Activated T-helper 1 cell treated with anti-CD3 and anti-CD28 coated beads, Interleukin-12 subunit alpha, Interleukin-12 subunit beta, Interleukin-2, Interleukin-4 antibody, amounts not matched to agents 30 ng/mL and 10 ng/mL and 1 ng/mL, durations not matched to agents 14 hours and 24 hours and 36 hours (primary cell): ENCODE measurements at regions of chr12 and their contacts with region 1.

Region 1: GRCh38 chr12:51326762-51327439 is 2.9 kb upstream of the BIN2 start:
- DNase-seq: peak; percentile 6
- H3K4me3 Mint-ChIP-seq: peak overlapping the region; percentile 55
- H3K27ac Mint-ChIP-seq: peak overlapping the region; percentile 89
- H3K4me1 Mint-ChIP-seq: peaks cover 75% of the 10 kb centered on the region
- H3K27me3 Mint-ChIP-seq: no peaks in the 10 kb centered on the region

Region 2: GRCh38 chr12:50504798-50505385 is 822.0 kb before region 1 on chr12 and contains the start of gene DIP2B:
- intact Hi-C with region 1: loop called (anchors 10 kb)
- DNase-seq: peak; percentile 93
- H3K4me3 Mint-ChIP-seq: peak within 1 kb of the TSS; percentile 95
- H3K27ac Mint-ChIP-seq: peak within 1 kb of the TSS; percentile 95
- H3K4me1 Mint-ChIP-seq: peaks cover 51% of the 10 kb centered on the region
- H3K27me3 Mint-ChIP-seq: peaks cover 2% of the 10 kb centered on the region
- total RNA-seq, gene DIP2B: 26.7 and 27.6 TPM in 2 replicates

Region 3: DNA sequence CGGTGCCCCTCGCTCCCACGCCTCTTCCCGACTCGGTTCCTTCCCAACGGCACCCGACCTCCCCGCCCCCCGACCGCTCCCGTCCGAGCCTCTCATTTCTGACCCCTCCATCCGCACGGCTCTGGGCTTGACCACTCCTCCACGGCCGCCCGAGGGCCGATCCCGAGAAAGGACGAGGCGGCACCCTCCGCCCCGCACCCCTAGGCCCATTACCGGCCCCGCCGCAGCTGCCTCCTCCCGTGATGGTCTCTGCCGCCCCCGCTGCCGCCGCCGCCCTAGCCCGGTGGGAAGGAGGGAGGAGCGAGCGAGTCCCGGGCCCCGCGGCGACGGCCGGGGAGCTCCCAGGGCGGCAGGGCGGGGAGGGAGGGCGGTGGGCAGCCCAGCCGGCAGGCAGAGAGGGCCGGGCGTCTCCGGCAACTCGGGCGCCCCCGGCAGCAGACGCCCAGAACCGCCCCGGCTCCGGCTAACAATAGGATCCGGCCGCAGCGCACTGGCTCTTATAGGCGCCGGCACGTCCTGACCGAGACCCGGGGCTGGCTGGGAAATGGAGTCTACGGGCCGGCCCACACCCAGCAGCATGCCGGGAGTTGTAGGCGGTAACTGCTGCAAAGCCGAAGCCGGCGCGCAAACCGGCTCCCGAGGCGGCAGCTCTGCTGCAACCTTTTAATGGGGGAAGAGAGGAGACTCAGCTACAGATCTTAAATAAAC is 243.6 kb before region 1 on chr12 and contains the start of gene CSRNP2:
- intact Hi-C with region 1: loop called (anchors 2 kb)
- DNase-seq: peak; percentile 94
- H3K4me3 Mint-ChIP-seq: peak within 1 kb of the TSS; percentile 99
- H3K27ac Mint-ChIP-seq: peak within 1 kb of the TSS; percentile 91
- H3K4me1 Mint-ChIP-seq: peaks cover 34% of the 10 kb centered on the region
- H3K27me3 Mint-ChIP-seq: peaks cover 3% of the 10 kb centered on the region
- total RNA-seq, gene CSRNP2: 28.6 and 35.2 TPM in 2 replicates

Region 4: DNA sequence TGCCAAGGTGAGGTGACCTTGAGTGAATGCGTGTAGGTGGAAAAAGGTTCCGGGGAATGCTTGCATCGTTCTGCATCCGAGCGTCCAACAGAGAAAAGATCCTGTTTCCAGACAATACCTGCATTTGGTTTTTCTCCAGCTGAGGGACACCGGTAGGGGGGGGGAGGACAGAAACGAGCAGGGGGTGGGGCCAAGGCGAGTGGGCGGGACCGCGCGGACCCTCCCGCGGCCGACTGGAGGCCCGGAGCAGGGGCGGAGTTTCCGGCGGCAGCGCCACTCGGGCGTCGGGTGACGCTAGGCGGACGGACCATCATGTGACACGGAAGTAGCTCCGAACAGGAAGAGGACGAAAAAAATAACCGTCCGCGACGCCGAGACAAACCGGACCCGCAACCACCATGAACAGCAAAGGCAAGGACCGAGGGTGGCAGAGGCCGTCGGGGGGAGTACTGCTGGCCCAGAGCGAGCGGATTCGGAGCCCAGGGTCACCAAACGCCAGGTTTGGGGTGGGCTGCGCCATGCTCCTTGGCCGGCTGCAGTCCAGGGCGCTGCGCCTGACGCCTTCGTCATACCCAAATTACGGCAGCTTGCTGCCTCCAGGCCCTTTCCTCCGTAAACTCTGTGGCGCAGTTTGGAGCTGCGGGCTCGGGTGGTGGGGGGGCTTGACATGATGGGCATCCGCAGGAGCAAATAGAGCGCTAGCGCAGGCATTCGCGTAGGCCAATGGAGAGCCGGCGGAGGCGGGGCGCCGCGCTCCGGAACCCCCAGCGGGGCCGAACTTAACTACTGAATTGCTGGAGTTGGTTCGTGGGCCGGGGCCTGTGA is 88.2 kb before region 1 on chr12 and contains the start of gene DAZAP2:
- intact Hi-C with region 1: loop called (anchors 1 kb)
- DNase-seq: peak; percentile 92
- H3K4me3 Mint-ChIP-seq: peak within 1 kb of the TSS; percentile 91
- H3K27ac Mint-ChIP-seq: peak within 1 kb of the TSS; percentile 99
- H3K4me1 Mint-ChIP-seq: peaks cover 45% of the 10 kb centered on the region
- H3K27me3 Mint-ChIP-seq: no peaks in the 10 kb centered on the region
- total RNA-seq, gene DAZAP2: 163 and 169 TPM in 2 replicates

Region 5: DNA sequence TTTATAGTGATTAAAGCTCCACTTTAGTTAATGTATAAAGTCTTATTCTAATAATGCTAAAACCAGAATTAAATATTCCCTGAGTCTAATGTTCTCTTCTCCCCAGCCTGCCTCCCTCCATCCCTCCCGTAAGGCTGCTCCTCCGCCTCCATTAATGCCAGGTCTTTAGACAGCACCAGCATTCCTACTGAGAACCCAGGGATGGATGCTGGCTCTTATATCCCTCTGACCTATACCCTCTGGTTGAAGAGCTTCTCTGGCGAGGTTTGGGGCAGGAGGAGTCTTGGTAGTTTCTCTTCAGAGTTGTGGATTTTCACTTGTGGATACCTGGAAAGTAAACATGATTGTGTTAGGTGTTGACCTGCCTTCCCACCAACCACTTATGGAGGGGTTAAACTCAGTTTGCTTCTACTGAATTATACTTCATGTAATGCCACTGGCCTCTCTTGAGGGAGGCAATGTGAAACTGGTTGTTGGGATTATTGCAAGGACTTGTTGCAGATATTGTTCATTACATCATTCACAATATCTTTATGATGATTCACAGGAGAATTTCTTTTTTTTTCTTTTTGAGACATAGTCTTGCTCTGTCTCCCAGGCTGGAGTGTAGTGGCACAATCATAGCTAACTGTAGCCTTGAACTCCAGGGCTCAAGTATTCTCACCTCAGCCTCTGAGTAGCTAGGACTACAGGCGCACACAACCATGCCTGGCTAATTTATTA is 45.5 kb before region 1 on chr12:
- intact Hi-C with region 1: no loop called
- DNase-seq: no peak
- H3K4me3 Mint-ChIP-seq: no peak overlapping the region
- H3K27ac Mint-ChIP-seq: no peak overlapping the region
- H3K4me1 Mint-ChIP-seq: no peaks in the 10 kb centered on the region
- H3K27me3 Mint-ChIP-seq: no peaks in the 10 kb centered on the region

Region 6: DNA sequence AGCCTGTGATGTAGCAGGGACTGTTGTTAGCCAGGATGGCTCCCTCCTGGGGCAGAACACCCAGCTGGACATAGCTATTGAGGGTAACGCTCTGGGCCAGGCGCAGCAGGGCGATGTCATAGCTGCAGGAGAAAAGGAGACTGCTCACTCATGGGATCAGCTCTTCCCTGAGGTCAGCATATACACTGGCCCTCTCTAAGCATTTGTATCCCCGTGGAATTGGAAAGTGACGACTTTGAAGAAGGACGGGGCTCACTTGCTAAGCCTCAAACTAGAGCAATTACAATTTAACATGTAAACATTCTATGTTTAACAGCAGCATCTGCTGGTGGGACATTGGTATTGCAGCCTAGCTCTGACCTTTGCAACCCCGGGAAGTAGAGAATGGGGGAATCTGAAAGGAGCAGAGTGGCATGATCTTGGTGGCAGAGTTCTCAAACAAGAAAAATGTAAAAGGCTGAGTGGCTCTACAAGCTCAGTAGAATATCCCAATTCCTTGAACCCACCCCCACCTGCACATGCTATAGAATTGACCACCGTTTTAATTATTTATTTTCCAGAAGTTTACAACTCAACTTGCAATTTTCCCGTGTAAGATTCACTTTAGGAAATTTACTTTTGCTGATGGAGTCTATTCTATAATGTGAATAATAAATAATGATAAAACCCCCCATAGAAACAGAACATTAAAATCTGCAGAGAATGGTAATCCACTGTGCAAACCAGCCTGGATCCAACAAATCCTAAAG is 14.5 kb after region 1 on chr12:
- intact Hi-C with region 1: loop called (anchors 1 kb)
- DNase-seq: peak; percentile 63
- H3K4me3 Mint-ChIP-seq: no peak overlapping the region
- H3K27ac Mint-ChIP-seq: no peak overlapping the region
- H3K4me1 Mint-ChIP-seq: peaks cover 12% of the 10 kb centered on the region
- H3K27me3 Mint-ChIP-seq: peaks cover 6% of the 10 kb centered on the region

Region 7: GRCh38 chr12:51441583-51441982 is 114.7 kb after region 1 on chr12:
- intact Hi-C with region 1: no loop called
- DNase-seq: peak; percentile 1
- H3K4me3 Mint-ChIP-seq: no peak overlapping the region
- H3K27ac Mint-ChIP-seq: no peak overlapping the region
- H3K4me1 Mint-ChIP-seq: peaks cover 42% of the 10 kb centered on the region
- H3K27me3 Mint-ChIP-seq: peaks cover 1% of the 10 kb centered on the region